ENCODE measurements at regions of chr18 and their contacts with region 1.

Region 1: GRCh38 chr18:22363867-22364463 is 53.8 kb downstream of the CTAGE1 start:
- DNase-seq: no peak
- H3K4me3 ChIP-seq: no peak overlapping the region
- H3K4me3 Mint-ChIP-seq: no peak overlapping the region
- H3K27ac ChIP-seq: no peak overlapping the region
- H3K27ac Mint-ChIP-seq: no peak overlapping the region
- H3K4me1 ChIP-seq: no peaks in the 10 kb centered on the region
- H3K4me1 Mint-ChIP-seq: peaks cover 0 to 4% (median 1%) of the 10 kb centered on the region in 4 donors
- H3K27me3 ChIP-seq: no peaks in the 10 kb centered on the region
- H3K27me3 Mint-ChIP-seq: no peaks in the 10 kb centered on the region

Region 2: GRCh38 chr18:21997207-21998143 is 366.5 kb before region 1 on chr18:
- CTCF ChIA-PET with region 1: no interaction called
- POLR2A ChIA-PET with region 1: no interaction called
- intact Hi-C with region 1: loop called (anchors 10 kb)
- DNase-seq: peak in 4 of 5 donors; percentile 11 to 26 (median 16)
- H3K4me3 ChIP-seq: no peak overlapping the region
- H3K4me3 Mint-ChIP-seq: no peak overlapping the region
- H3K27ac ChIP-seq: no peak overlapping the region
- H3K27ac Mint-ChIP-seq: no peak overlapping the region
- H3K4me1 ChIP-seq: no peaks in the 10 kb centered on the region
- H3K4me1 Mint-ChIP-seq: peaks cover 4 to 10% (median 4%) of the 10 kb centered on the region in 4 donors
- H3K27me3 ChIP-seq: no peaks in the 10 kb centered on the region
- H3K27me3 Mint-ChIP-seq: peaks cover 2 to 3% of the 10 kb centered on the region in 2 donors

Region 3: DNA sequence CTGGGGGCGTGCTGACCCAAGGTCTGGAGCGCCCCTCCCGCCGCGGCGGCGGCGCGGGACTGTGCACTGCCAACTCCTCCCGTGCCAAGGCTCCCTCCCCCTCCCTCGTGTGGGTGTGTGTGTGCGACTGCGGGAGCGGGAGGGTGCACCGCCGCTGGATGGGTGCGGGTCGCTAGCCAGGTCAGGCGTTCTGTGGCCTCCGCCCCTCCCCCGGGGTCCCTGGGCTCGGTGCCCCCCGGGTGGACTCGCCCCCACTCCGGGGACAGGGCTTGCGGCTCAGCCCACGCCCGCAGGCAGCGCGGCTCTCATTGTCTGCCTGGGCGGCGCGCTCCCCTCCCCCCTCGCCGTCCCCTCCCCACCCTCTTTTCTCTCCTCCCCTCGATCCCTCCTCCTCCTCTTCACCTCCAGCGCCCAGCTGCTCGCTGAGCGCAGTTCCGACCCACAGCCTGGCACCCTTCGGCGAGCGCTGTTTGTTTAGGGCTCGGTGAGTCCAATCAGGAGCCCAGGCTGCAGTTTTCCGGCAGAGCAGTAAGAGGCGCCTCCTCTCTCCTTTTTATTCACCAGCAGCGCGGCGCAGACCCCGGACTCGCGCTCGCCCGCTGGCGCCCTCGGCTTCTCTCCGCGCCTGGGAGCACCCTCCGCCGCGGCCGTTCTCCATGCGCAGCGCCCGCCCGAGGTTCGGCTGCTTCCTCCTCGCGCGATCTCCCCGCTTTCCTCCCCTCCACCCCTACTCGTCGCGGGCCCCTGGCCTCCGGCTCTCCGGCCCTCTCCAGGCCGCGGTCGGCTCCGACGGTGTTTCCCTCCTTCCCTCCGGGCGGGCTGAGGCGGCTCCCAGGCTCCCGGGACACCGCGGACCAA is 194.7 kb before region 1 on chr18 and contains the start of gene GATA6:
- CTCF ChIA-PET with region 1: no interaction called
- POLR2A ChIA-PET with region 1: no interaction called
- intact Hi-C with region 1: loop called (anchors 5 kb)
- DNase-seq: peak in 3 of 5 donors; percentile 12 to 28 (median 27)
- H3K4me3 ChIP-seq: peak within 1 kb of the TSS in 1 of 2 donors; percentile 37
- H3K4me3 Mint-ChIP-seq: peak within 1 kb of the TSS; percentile 79 to 90 (median 85)
- H3K27ac ChIP-seq: no peak within 1 kb of the TSS
- H3K27ac Mint-ChIP-seq: peak within 1 kb of the TSS in 1 of 7 donors; percentile 72
- H3K4me1 ChIP-seq: peaks cover 14% of the 10 kb centered on the region
- H3K4me1 Mint-ChIP-seq: peaks cover 17 to 29% (median 22%) of the 10 kb centered on the region in 4 donors
- H3K27me3 ChIP-seq: peaks cover 37% of the 10 kb centered on the region
- H3K27me3 Mint-ChIP-seq: peaks cover 45 to 60% of the 10 kb centered on the region in 2 donors
- total RNA-seq, gene GATA6: not detected

Region 4: DNA sequence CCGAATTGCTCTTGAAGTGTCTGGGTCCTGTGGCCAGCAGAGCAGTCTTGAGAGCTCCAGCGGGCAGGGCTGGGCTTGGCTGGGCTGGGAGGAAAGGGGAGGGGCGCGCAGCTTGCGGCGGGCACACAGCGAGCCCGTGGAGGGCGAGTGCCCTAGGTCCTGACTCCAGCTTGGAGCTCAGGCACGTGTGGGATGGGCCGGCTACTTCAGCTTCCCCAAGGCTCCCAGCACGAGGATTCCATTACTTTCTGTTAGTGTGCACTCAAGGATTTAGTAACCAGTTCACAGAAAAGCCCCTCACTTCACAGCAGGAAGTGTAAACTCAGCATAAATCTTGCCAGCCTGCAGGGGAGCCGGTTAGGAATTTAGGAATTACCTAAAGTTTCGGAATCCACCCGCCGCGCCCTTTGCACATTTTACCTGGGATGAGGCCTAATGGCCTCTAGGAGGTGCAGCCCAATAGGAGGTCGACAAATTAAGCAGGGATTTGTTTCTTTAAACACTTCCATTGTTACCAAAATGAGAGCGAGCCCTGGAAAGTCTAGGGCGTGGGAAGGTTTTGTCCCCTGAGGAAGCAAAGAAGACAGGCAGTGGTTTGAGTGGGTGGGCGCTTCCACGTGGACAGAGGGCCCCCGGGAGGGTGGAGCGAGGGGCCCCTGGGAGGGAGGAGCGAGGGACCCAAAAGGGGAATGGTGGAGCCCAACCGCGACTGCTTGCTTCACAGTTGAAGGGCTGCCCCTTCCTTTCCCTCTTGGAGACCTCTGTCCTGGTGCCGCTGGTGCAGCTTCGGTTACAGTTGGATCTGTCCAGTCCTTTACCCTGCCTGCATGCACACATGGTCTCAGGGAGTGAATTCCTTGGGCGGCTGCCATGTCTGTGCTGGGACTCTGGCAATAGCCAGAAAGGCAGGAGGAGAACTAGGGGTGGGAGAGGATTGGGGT is 39.5 kb before region 1 on chr18:
- CTCF ChIA-PET with region 1: no interaction called
- POLR2A ChIA-PET with region 1: no interaction called
- intact Hi-C with region 1: loop called (anchors 1 kb)
- DNase-seq: no peak
- H3K4me3 ChIP-seq: no peak overlapping the region
- H3K4me3 Mint-ChIP-seq: peak overlapping the region in 7 of 8 donors; percentile 33 to 71 (median 53)
- H3K27ac ChIP-seq: no peak overlapping the region
- H3K27ac Mint-ChIP-seq: peak overlapping the region in 2 of 7 donors; percentile 36 to 76
- H3K4me1 ChIP-seq: no peaks in the 10 kb centered on the region
- H3K4me1 Mint-ChIP-seq: peaks cover 0 to 7% (median 2%) of the 10 kb centered on the region in 4 donors
- H3K27me3 ChIP-seq: no peaks in the 10 kb centered on the region
- H3K27me3 Mint-ChIP-seq: no peaks in the 10 kb centered on the region

Region 5: GRCh38 chr18:22339913-22340312 is 24.1 kb before region 1 on chr18:
- CTCF ChIA-PET with region 1: no interaction called
- POLR2A ChIA-PET with region 1: no interaction called
- intact Hi-C with region 1: no loop called
- DNase-seq: no peak
- H3K4me3 ChIP-seq: no peak overlapping the region
- H3K4me3 Mint-ChIP-seq: no peak overlapping the region
- H3K27ac ChIP-seq: no peak overlapping the region
- H3K27ac Mint-ChIP-seq: peak overlapping the region in 3 of 7 donors; percentile 24 to 41 (median 37)
- H3K4me1 ChIP-seq: peaks cover 64% of the 10 kb centered on the region
- H3K4me1 Mint-ChIP-seq: peaks cover 17 to 58% (median 36%) of the 10 kb centered on the region in 4 donors
- H3K27me3 ChIP-seq: no peaks in the 10 kb centered on the region
- H3K27me3 Mint-ChIP-seq: no peaks in the 10 kb centered on the region